Heart right ventricle (tissue), 16 donors: ENCODE measurements at regions of chr7 and their contacts with region 1.

Region 1: GRCh38 chr7:22586786-22587140 is 86.8 kb upstream of the STEAP1B start:
- DNase-seq: no peak
- ATAC-seq: no peak
- H3K4me3 ChIP-seq: no peak overlapping the region
- H3K27ac ChIP-seq: peak overlapping the region in 4 of 10 donors; percentile 16 to 93 (median 36)
- H3K4me1 ChIP-seq: peaks cover 21 to 82% (median 70%) of the 10 kb centered on the region in 9 donors
- H3K27me3 ChIP-seq: no peaks in the 10 kb centered on the region
- CTCF ChIP-seq: peak in 8 of 9 donors; percentile 13 to 50 (median 38)

Region 2: GRCh38 chr7:22565315-22565811 is 21.4 kb before region 1 on chr7:
- intact Hi-C with region 1: loop called in 4 of 10 experiments (anchors 2 kb)
- DNase-seq: no peak
- ATAC-seq: peak in 6 of 8 donors; percentile 5 to 41 (median 21)
- H3K4me3 ChIP-seq: no peak overlapping the region
- H3K27ac ChIP-seq: peak overlapping the region in 8 of 10 donors; percentile 72 to 91 (median 85)
- H3K4me1 ChIP-seq: peaks cover 11 to 73% (median 57%) of the 10 kb centered on the region in 9 donors
- H3K27me3 ChIP-seq: peaks cover 0 to 12% (median 0%) of the 10 kb centered on the region in 7 donors
- CTCF ChIP-seq: no peak

Region 3: GRCh38 chr7:22640269-22640668 is 53.5 kb after region 1 on chr7:
- intact Hi-C with region 1: no loop called
- DNase-seq: no peak
- ATAC-seq: no peak
- H3K4me3 ChIP-seq: no peak overlapping the region
- H3K27ac ChIP-seq: no peak overlapping the region
- H3K4me1 ChIP-seq: no peaks in the 10 kb centered on the region
- H3K27me3 ChIP-seq: no peaks in the 10 kb centered on the region
- CTCF ChIP-seq: no peak

Region 4: GRCh38 chr7:22718200-22718711 is 131.5 kb after region 1 on chr7:
- intact Hi-C with region 1: loop called in 1 of 10 experiments (anchors 5 kb)
- DNase-seq: no peak
- ATAC-seq: peak; percentile 39 to 77 (median 56)
- H3K4me3 ChIP-seq: no peak overlapping the region
- H3K27ac ChIP-seq: peak overlapping the region in 8 of 10 donors; percentile 4 to 78 (median 56)
- H3K4me1 ChIP-seq: peaks cover 0 to 51% (median 24%) of the 10 kb centered on the region in 9 donors
- H3K27me3 ChIP-seq: no peaks in the 10 kb centered on the region
- CTCF ChIP-seq: no peak

Region 5: GRCh38 chr7:22759721-22760120 is 173.0 kb after region 1 on chr7:
- intact Hi-C with region 1: no loop called
- DNase-seq: no peak
- ATAC-seq: no peak
- H3K4me3 ChIP-seq: no peak overlapping the region
- H3K27ac ChIP-seq: no peak overlapping the region
- H3K4me1 ChIP-seq: no peaks in the 10 kb centered on the region
- H3K27me3 ChIP-seq: peaks cover 0 to 6% (median 0%) of the 10 kb centered on the region in 7 donors
- CTCF ChIP-seq: no peak